Calu3 (cell line): ENCODE measurements at regions of chr17 and their contacts with region 1.

Region 1: DNA sequence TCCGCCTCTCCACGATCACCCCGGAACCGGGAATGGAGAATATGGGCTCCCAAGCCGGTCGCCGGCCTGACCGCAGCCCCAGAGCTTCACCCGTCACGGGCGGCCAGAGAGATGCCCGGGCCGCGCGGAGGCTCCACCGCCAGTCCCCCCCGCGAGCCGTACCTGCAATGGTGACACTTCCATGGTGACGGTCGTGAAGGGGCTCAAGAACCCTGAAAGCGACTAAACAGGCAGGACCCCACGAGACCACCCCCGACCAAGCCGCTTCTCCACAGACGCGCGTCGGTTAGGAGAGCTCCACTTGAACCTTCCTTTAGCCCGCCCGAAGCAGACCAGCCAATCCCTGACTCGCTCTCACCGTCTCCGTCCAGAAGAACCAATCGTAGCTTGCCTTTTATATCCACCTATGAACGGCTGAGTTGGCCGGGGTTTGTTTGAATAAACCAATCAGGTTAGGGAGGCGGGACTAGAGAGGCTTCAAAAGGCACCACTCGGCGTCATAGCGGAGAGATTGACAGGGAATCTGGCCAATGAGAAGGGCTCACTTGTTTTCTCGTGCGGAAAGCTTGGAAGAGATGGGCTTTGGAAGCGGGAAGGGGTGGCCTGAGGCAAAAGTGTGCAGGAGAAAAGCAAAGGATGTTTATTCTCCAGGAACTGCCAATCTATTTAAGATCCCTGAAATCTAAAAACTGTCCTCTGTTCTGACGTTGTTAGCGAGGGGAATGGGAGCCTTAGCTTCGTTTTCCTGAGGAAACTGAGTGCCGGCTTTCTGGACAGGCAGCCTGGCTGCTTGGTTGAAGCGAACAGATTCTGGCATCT is at the start of gene TOP2A:
- DNase-seq: peak; percentile 100
- H3K4me3 Mint-ChIP-seq: peak within 1 kb of the TSS; percentile 96
- H3K27ac Mint-ChIP-seq: peak within 1 kb of the TSS; percentile 94
- H3K4me1 Mint-ChIP-seq: peaks cover 42% of the 10 kb centered on the region
- H3K27me3 Mint-ChIP-seq: no peaks in the 10 kb centered on the region
- CTCF ChIP-seq: no peak
- total RNA-seq, gene TOP2A: 1,389 and 1,672 TPM in 2 replicates

Region 2: GRCh38 chr17:39443326-39443725 is 974.5 kb before region 1 on chr17:
- CTCF ChIA-PET with region 1: no interaction called
- intact Hi-C with region 1: no loop called
- DNase-seq: no peak
- H3K4me3 Mint-ChIP-seq: no peak overlapping the region
- H3K27ac Mint-ChIP-seq: no peak overlapping the region
- H3K4me1 Mint-ChIP-seq: peaks cover 7% of the 10 kb centered on the region
- H3K27me3 Mint-ChIP-seq: no peaks in the 10 kb centered on the region
- CTCF ChIP-seq: no peak

Region 3: DNA sequence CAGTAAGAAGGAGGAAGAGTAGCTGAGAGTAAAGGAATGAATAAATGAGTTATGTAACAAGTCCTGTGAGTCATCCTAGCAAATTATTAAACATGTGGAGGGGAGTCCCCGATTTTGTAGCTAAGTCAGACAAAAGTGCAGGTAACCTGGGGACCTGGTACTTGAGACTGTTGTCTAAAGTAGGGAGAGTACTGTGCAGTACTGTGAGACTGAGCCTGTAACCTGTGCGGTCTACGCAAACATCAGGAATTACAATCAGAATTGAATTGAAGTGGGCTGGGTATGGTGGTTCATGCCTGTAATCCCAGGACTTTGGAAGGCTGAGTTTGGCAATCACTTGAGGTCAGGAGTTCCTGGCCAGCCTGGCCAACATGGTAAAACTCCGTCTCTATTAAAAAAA is 589.4 kb before region 1 on chr17:
- CTCF ChIA-PET with region 1: interaction called, 17 read pairs
- intact Hi-C with region 1: no loop called
- DNase-seq: peak; percentile 100
- H3K4me3 Mint-ChIP-seq: peak overlapping the region; percentile 36
- H3K27ac Mint-ChIP-seq: peak overlapping the region; percentile 48
- H3K4me1 Mint-ChIP-seq: peaks cover 17% of the 10 kb centered on the region
- H3K27me3 Mint-ChIP-seq: no peaks in the 10 kb centered on the region
- CTCF ChIP-seq: no peak

Region 4: DNA sequence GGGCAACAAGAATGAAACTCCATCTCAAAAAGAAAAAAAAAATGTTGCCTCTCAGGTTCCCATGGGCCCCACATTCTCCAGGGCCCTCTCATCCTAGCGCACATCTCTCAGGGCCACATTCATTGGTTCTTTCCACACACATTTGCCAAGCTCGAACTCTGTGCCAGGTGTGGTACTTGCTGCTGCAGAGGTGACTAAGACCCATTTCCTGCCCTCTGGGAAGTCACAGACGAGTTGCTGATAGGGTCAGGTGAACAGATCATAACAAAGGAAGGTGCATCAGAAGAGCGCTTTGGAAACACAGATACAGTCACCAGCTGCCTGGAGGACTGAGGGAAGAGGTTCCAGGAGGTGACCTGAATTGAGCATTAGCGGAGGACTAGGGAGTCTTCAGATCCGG is 454.0 kb before region 1 on chr17:
- CTCF ChIA-PET with region 1: interaction called, 49 read pairs
- intact Hi-C with region 1: no loop called
- DNase-seq: peak; percentile 94
- H3K4me3 Mint-ChIP-seq: no peak overlapping the region
- H3K27ac Mint-ChIP-seq: peak overlapping the region; percentile 0
- H3K4me1 Mint-ChIP-seq: peaks cover 45% of the 10 kb centered on the region
- H3K27me3 Mint-ChIP-seq: peaks cover 32% of the 10 kb centered on the region
- CTCF ChIP-seq: no peak

Region 5: GRCh38 chr17:40303009-40303657 is 114.7 kb before region 1 on chr17:
- CTCF ChIA-PET with region 1: interaction called, 9 read pairs
- intact Hi-C with region 1: loop called (anchors 1 kb)
- DNase-seq: peak; percentile 94
- H3K4me3 Mint-ChIP-seq: no peak overlapping the region
- H3K27ac Mint-ChIP-seq: peak overlapping the region; percentile 26
- H3K4me1 Mint-ChIP-seq: peaks cover 34% of the 10 kb centered on the region
- H3K27me3 Mint-ChIP-seq: no peaks in the 10 kb centered on the region
- CTCF ChIP-seq: peak; percentile 99

Region 6: GRCh38 chr17:40387680-40388079 is 30.1 kb before region 1 on chr17:
- CTCF ChIA-PET with region 1: interaction called, 18 read pairs
- intact Hi-C with region 1: no loop called
- DNase-seq: no peak
- H3K4me3 Mint-ChIP-seq: no peak overlapping the region
- H3K27ac Mint-ChIP-seq: no peak overlapping the region
- H3K4me1 Mint-ChIP-seq: no peaks in the 10 kb centered on the region
- H3K27me3 Mint-ChIP-seq: no peaks in the 10 kb centered on the region
- CTCF ChIP-seq: no peak

Region 7: DNA sequence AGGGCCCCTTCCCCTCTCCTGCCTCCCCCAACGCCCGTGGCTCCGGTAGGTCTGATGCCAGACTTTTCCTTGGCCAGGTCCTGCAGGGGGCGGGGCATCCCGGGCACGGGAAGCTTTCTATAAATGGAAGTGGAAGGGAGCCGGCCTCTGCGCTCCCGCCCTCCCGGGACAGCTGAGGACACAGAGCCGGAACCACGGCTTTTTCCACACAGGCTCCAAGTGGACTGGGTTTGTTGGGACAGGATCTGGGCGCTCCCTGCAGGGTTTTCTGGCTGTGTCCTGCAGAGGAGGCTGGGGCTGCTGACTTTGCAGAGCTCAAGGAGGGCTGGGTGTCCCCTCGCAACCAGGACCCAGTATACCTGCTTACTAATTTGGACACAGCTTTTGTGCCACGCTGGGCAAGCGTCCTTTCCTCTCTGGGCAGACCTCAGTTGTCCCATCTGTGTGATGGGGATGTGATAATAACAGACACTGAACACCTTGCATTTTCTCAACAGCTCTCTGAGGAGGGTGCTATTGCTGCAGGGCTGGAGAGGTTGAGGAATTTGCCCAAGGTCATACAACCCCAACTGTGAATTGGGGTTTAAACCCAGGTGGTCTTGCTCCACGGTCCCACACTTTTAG is 81.8 kb after region 1 on chr17:
- CTCF ChIA-PET with region 1: interaction called, 20 read pairs
- intact Hi-C with region 1: no loop called
- DNase-seq: peak; percentile 100
- H3K4me3 Mint-ChIP-seq: peak overlapping the region; percentile 33
- H3K27ac Mint-ChIP-seq: no peak overlapping the region
- H3K4me1 Mint-ChIP-seq: peaks cover 20% of the 10 kb centered on the region
- H3K27me3 Mint-ChIP-seq: peaks cover 82% of the 10 kb centered on the region
- CTCF ChIP-seq: no peak

Region 8: DNA sequence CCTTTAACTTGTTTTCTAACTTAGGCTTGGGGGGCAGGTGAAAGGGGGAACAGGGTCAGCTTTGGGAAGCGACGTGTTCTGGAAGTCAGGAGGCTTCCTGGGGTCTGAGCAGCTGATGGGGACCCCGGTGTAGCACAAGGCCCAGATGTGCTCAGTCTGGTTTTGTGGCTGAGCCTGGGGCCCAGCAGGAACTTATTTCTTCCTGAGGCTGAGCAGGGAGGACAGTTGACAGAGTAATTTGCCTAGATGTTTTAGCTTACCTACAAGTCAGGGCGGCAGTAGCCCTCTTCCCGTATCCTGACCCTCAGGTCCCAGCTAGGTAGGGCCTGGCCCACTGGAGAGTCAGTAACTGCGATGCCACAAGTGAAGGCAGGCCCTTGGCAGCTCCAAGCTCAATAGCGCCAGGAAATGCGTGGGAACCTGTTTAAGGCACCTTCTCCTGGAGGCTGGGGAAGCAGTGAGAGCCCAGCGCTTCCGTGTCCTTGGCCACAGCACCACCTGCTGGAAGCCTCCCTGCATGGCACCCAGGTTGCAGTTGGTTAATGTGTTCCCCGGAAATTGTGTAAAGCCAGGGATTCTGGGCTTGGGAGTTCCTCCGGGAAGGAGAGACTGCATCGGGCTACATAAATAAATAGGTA is 142.3 kb after region 1 on chr17:
- CTCF ChIA-PET with region 1: interaction called, 128 read pairs
- intact Hi-C with region 1: loop called (anchors 1 kb)
- DNase-seq: peak; percentile 100
- H3K4me3 Mint-ChIP-seq: peak overlapping the region; percentile 47
- H3K27ac Mint-ChIP-seq: no peak overlapping the region
- H3K4me1 Mint-ChIP-seq: peaks cover 17% of the 10 kb centered on the region
- H3K27me3 Mint-ChIP-seq: peaks cover 99% of the 10 kb centered on the region
- CTCF ChIP-seq: no peak